Activated CD4-positive, alpha-beta memory T cell treated with anti-CD3 and anti-CD28 coated beads for 36 hours (primary cell): ENCODE measurements at regions of chr16 and their contacts with region 1.

Region 1: DNA sequence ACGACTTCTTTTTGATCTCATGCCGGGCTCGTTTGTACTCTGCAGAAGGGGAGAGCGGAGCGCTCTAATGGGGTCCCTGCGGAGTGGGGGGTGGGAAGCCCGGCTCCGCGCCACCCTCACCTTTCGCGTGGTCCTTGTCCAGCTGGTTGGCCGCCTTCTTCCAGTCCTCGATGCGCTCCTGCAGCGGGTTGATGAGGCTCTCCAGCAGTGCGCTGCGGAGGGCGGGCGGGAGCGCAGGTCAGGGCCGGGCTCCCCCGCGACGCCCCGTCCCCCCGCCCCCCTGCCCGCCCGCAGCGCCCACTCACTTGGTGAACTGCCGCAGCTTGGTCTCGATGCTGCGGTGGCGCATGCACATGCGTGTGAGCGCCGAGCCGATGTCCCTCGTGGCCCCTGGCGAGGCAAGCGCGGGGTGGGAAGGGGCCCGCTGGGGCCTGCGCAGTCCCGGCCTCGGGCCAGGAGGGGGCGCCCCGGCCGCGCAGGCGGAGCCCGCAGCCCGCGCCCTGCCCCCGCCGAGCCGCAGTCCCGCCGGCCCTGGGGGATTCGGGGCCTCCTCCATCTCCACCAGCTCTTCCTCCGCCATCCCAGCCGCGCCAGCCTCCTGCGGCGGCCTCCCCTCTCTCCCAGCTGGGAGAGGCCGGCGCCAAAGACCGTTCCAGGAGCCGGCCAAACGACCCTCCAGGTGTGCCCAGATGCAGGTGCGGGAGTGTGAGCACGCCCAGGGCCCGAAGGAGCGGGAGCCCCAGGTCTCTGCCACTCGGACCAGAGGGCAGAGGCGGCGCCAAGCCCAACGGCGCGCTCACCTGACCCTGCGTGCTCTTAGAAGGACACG is 6.0 kb downstream of the MTSS2 start:
- DNase-seq: no peak
- H3K4me3 Mint-ChIP-seq: no peak overlapping the region
- H3K27ac Mint-ChIP-seq: no peak overlapping the region
- H3K4me1 Mint-ChIP-seq: no peaks in the 10 kb centered on the region
- H3K27me3 Mint-ChIP-seq: peaks cover 12% of the 10 kb centered on the region

Region 2: DNA sequence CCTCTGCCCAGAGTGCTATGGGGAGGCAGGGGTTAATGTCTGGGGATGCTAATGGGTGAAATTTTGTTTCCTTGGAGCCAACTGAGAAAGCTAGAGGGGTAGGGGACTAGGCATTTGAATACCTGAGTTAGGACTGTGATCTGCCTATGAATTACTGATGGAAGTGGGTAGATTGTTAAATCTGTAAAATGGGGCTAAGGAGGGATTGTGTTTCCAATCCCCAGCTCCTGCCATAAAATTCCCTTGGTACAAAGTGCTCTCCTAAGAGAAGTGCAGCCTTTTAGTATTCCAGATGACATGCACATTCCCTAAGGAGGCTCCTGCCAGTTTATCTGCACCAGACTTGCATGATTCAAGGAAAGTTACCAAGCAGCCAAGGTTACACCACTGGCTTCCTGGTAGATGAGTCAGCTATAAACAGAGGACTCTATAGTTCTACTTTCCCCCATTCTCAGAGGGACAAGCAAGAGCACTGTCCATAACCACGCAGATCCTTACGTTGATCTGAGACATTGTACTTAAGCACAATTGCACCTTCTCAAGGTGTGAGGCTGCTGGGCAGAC is 680.4 kb after region 1 on chr16:
- CTCF ChIA-PET with region 1: no interaction called
- POLR2A ChIA-PET with region 1: no interaction called
- intact Hi-C with region 1: loop called (anchors 5 kb)
- DNase-seq: no peak
- H3K4me3 Mint-ChIP-seq: no peak overlapping the region
- H3K27ac Mint-ChIP-seq: no peak overlapping the region
- H3K4me1 Mint-ChIP-seq: no peaks in the 10 kb centered on the region
- H3K27me3 Mint-ChIP-seq: peaks cover 11% of the 10 kb centered on the region